ENCODE measurements at regions of chr14 and their contacts with region 1.

Region 1: GRCh38 chr14:103185051-103185992 is 62.1 kb downstream of the TNFAIP2 start:
- DNase-seq: no peak
- H3K4me3 ChIP-seq: no peak overlapping the region
- H3K27ac ChIP-seq: no peak overlapping the region
- H3K4me1 ChIP-seq: peaks cover 11% of the 10 kb centered on the region
- H3K27me3 ChIP-seq: peaks cover 55% of the 10 kb centered on the region
- CTCF ChIP-seq: peak; percentile 72

Region 2: DNA sequence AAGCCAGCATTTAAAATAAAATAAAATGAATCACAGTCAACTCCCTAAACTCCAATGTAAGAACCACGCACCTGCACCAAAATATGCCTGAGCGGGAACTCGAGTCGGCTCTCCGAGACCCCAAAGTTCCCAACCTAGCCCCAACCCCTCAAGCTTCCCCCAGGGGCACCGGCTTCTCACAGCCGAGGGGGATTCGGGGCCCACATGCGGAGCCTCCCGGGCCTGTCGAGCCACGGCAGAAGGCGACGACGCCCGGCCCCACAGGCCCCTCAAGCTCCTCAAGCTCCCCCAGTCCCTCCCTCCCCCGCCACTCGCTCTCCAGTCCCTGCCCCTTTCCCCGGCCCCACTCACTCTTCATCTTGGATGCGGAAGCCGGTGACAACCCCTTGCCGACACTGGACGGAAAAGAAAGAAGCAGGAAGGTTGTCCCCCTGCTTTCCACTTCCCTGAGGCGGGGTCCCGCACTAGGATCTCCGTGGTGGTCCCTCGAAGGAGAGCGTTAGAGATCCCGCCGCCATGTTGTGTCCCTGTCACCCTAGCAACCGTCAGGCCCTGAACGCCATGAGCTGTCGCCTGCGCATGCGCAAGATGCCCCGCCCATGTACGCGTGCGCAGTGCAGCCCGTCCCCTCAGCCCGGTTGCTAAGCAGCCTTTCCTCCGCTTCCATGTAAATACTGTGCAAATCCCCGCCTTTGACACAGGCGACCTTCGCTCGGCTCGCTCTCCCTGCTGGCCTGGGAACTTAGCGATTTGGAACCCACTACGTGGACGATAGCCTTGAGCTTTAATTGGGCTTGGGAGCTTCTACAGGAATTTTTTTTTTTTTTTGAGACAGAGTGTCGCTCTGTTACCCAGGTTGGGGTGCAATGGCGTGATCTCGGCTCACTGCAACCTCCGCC is 880.5 kb before region 1 on chr14 and contains the start of gene MOK:
- intact Hi-C with region 1: no loop called
- DNase-seq: peak; percentile 96
- H3K4me3 ChIP-seq: peak within 1 kb of the TSS; percentile 77
- H3K27ac ChIP-seq: peak within 1 kb of the TSS; percentile 85
- H3K4me1 ChIP-seq: peaks cover 19% of the 10 kb centered on the region
- H3K27me3 ChIP-seq: no peaks in the 10 kb centered on the region
- CTCF ChIP-seq: no peak
- total RNA-seq, gene MOK: 12.2 TPM

Region 3: GRCh38 chr14:103104654-103105452 is 80.5 kb before region 1 on chr14:
- intact Hi-C with region 1: loop called (anchors 10 kb)
- DNase-seq: peak; percentile 73
- H3K4me3 ChIP-seq: peak overlapping the region; percentile 51
- H3K27ac ChIP-seq: no peak overlapping the region
- H3K4me1 ChIP-seq: peaks cover 35% of the 10 kb centered on the region
- H3K27me3 ChIP-seq: peaks cover 56% of the 10 kb centered on the region
- CTCF ChIP-seq: peak; percentile 94

Region 4: DNA sequence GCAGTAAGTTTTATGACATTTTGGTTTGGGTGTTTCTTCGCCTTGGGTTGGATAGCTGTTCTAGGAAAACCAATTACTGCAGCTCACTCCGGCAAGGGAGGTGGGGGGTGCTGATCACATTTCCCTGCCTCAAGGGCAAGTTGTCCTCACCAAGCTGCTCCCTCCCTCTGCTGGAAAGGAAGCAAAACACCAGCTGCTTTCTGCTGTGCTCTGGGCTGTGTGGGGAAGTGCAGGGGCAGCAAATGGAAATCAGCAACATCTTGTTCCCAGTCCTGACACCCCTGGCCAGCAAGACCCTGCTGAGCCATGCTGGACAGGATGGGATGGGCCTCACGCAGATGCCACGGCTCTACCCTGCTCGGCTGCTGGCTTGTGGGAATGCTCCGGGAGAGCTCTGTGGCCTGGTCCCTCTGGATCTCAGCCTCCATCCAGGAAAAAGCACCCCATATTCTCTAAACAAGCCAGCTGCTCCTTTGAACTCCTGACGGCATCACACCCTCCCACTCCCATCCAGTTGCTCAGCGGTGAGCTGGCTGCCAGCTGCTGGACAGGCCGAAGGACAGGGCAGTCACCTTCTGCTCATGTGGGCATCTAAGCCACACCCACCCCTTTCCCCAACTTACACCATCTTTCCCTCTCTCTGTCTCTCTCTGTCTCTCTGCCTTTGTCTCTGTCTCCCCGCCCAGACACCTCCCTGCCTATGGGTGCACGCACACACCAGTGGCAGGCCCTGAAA is 96.3 kb after region 1 on chr14:
- intact Hi-C with region 1: loop called (anchors 5 kb)
- DNase-seq: no peak
- H3K4me3 ChIP-seq: no peak overlapping the region
- H3K27ac ChIP-seq: no peak overlapping the region
- H3K4me1 ChIP-seq: peaks cover 28% of the 10 kb centered on the region
- H3K27me3 ChIP-seq: peaks cover 99% of the 10 kb centered on the region
- CTCF ChIP-seq: peak; percentile 50

Region 5: GRCh38 chr14:103393676-103394626 is 208.6 kb after region 1 on chr14:
- intact Hi-C with region 1: no loop called
- DNase-seq: no peak
- H3K4me3 ChIP-seq: peak overlapping the region; percentile 46
- H3K27ac ChIP-seq: peak overlapping the region; percentile 87
- H3K4me1 ChIP-seq: peaks cover 97% of the 10 kb centered on the region
- H3K27me3 ChIP-seq: no peaks in the 10 kb centered on the region
- CTCF ChIP-seq: peak; percentile 92

Region 6: GRCh38 chr14:103483600-103483999 is 298.3 kb after region 1 on chr14:
- intact Hi-C with region 1: no loop called
- DNase-seq: no peak
- H3K4me3 ChIP-seq: no peak overlapping the region
- H3K27ac ChIP-seq: no peak overlapping the region
- H3K4me1 ChIP-seq: peaks cover 19% of the 10 kb centered on the region
- H3K27me3 ChIP-seq: no peaks in the 10 kb centered on the region
- CTCF ChIP-seq: no peak

Measured in left ventricle myocardium inferior (tissue), 1 donor.